Mammary epithelial cell (primary cell): ENCODE measurements at regions of chr17 and their contacts with region 1.

Region 1: DNA sequence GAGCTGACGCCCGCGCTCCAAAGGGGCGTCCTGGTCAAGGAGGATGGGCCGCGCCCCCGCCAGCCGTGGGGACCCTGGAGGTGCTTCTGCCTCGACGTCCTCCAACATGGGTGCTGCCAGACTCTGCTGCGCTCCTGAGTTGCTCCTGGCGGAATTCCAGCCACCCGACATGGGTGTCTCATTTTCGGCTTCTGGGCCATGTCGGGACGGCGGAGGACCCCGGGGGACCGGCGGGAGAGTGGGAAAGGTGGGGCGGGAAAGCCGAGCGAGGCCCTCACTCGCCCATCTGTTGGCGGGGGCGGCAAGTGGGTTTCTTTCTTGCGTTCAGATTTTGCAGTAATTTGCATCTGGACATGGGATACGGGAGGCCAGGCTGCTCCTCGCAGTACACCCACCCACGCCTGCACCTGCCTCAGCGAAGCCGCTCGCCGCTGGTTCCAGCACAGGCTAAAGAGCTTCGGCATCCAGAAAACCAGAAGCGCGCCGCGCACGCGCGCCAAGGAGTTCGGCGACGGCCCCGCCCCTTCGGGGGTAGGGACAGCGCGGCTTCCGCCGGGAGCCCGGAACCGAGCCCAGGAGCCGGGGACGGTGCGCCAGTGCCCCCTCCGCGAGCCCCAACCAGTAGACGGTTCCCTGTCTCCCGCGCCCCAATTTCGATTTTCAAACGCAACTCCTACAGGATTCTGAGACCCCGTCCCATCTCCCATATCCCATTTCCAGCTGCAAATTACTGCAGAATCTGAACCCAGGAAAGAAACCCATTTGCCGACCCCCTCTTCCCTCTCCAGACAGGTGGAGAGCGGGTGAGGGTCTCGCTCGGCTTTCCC is at the start of gene ARMC7:
- DNase-seq: peak; percentile 80
- H3K4me3 ChIP-seq: peak within 1 kb of the TSS; percentile 71 to 85 (median 79)
- H3K27ac ChIP-seq: peak within 1 kb of the TSS; percentile 16
- H3K4me1 ChIP-seq: peaks cover 15% of the 10 kb centered on the region
- H3K27me3 ChIP-seq: no peaks in the 10 kb centered on the region
- CTCF ChIP-seq: no peak
- total RNA-seq, gene ARMC7: 2.8 to 8.3 TPM

Region 2: DNA sequence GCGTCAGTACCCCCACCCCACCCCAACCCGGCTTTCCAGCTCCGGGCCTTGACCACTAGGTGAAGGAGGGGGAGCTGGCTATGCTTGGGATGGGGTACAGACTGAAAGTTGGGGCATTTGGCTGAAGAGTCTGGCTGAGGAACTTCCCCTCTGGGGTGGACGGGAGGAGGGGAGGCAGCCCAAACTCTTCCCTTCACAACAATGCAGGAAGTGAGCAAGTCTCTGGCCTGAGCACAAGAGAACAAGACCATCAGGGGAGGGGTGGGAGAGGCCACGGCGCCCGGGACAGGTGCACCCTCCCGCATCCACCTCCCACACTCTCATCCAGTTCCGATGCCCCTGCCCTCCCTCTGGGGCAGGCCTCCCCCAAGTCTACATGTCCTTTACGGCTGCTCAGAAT is 192.2 kb before region 1 on chr17:
- CTCF ChIA-PET with region 1: no interaction called
- dilution Hi-C with region 1: no loop called
- in situ Hi-C with region 1: no loop called
- intact Hi-C with region 1: no loop called
- DNase-seq: no peak
- H3K4me3 ChIP-seq: no peak overlapping the region
- H3K27ac ChIP-seq: no peak overlapping the region
- H3K4me1 ChIP-seq: peaks cover 15% of the 10 kb centered on the region
- H3K27me3 ChIP-seq: no peaks in the 10 kb centered on the region
- CTCF ChIP-seq: no peak

Region 3: DNA sequence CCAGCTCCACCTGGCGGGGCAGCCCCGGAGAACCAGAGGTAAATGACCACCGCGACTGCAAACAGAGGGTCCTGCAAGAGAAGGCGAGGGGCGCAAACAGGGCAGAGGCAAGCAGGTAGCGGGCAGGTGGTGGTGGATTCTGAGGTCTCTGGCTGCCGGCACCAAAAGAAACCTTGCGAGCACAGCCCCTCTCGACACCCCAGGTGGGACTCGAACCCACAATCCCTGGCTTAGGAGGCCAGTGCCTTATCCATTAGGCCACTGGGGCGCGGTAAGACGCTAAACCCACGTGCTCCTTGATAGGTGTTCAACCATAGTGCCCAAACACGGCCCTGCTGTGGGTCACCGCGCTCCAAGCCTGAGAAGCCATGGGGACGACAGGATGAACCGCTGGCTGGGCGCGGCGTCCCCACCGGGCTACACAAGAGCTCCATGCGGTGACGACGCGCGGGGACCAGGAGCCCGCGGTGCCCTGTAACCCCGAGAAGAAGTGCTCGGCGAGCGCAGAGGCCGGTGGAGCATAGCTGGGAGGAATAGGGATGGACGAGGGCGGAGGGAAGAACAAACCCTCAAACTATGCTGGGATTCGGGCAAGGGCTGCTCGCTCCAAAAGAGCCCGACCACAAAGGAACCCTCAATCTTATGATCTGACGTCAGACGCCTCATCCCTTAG is 75.2 kb before region 1 on chr17:
- CTCF ChIA-PET with region 1: no interaction called
- dilution Hi-C with region 1: no loop called
- in situ Hi-C with region 1: no loop called
- intact Hi-C with region 1: loop called (anchors 1 kb)
- DNase-seq: peak; percentile 91
- H3K4me3 ChIP-seq: peak overlapping the region; percentile 57 to 85 (median 65)
- H3K27ac ChIP-seq: peak overlapping the region; percentile 86
- H3K4me1 ChIP-seq: peaks cover 15% of the 10 kb centered on the region
- H3K27me3 ChIP-seq: no peaks in the 10 kb centered on the region
- CTCF ChIP-seq: peak in 1 of 2 donors; percentile 36

Region 4: GRCh38 chr17:75059369-75060345 is 50.0 kb before region 1 on chr17:
- CTCF ChIA-PET with region 1: interaction called, 7 read pairs
- dilution Hi-C with region 1: no loop called
- in situ Hi-C with region 1: loop called in 1 of 2 experiments (anchors 10 kb)
- intact Hi-C with region 1: no loop called
- DNase-seq: no peak
- H3K4me3 ChIP-seq: no peak overlapping the region
- H3K27ac ChIP-seq: no peak overlapping the region
- H3K4me1 ChIP-seq: no peaks in the 10 kb centered on the region
- H3K27me3 ChIP-seq: no peaks in the 10 kb centered on the region
- CTCF ChIP-seq: peak; percentile 13 to 31

Region 5: DNA sequence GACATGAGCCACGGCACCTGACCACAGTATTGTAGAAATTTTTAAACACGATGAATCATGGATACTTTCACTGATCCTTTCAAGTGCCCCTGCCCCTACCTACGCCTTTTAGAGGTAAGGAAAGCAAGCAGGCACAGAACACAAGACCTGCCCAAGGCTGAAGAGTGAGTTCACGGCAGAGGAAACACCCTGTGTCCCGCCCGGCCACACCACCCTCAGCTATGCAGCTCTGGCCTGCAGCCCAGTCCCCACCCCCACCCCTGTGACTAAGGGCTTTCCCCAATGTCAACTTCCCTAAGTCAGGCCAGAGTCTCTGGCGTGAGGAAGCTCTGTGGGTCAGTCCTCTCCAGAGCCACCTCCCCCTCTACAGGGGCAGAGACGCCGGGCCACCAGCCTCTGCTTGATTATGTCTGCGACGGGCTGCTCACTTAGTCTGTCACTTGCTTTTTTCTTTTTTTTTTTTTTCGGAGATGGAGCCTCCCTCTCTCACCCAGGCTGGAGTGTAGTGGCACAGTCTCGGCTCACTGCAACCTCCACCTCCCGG is 13.5 kb before region 1 on chr17:
- CTCF ChIA-PET with region 1: no interaction called
- dilution Hi-C with region 1: no loop called
- in situ Hi-C with region 1: no loop called
- intact Hi-C with region 1: loop called (anchors 1 kb)
- DNase-seq: peak; percentile 99
- H3K4me3 ChIP-seq: no peak overlapping the region
- H3K27ac ChIP-seq: peak overlapping the region; percentile 35
- H3K4me1 ChIP-seq: peaks cover 17% of the 10 kb centered on the region
- H3K27me3 ChIP-seq: no peaks in the 10 kb centered on the region
- CTCF ChIP-seq: no peak

Region 6: GRCh38 chr17:75154195-75155106 is 44.8 kb after region 1 on chr17 and contains the start of gene JPT1:
- CTCF ChIA-PET with region 1: interaction called, 7 read pairs
- dilution Hi-C with region 1: no loop called
- in situ Hi-C with region 1: no loop called
- intact Hi-C with region 1: loop called (anchors 1 kb)
- DNase-seq: peak; percentile 99
- H3K4me3 ChIP-seq: peak within 1 kb of the TSS; percentile 92 to 94 (median 93)
- H3K27ac ChIP-seq: peak within 1 kb of the TSS; percentile 61
- H3K4me1 ChIP-seq: peaks cover 29% of the 10 kb centered on the region
- H3K27me3 ChIP-seq: no peaks in the 10 kb centered on the region
- CTCF ChIP-seq: no peak
- total RNA-seq, gene JPT1: 107 to 223 TPM

Region 7: DNA sequence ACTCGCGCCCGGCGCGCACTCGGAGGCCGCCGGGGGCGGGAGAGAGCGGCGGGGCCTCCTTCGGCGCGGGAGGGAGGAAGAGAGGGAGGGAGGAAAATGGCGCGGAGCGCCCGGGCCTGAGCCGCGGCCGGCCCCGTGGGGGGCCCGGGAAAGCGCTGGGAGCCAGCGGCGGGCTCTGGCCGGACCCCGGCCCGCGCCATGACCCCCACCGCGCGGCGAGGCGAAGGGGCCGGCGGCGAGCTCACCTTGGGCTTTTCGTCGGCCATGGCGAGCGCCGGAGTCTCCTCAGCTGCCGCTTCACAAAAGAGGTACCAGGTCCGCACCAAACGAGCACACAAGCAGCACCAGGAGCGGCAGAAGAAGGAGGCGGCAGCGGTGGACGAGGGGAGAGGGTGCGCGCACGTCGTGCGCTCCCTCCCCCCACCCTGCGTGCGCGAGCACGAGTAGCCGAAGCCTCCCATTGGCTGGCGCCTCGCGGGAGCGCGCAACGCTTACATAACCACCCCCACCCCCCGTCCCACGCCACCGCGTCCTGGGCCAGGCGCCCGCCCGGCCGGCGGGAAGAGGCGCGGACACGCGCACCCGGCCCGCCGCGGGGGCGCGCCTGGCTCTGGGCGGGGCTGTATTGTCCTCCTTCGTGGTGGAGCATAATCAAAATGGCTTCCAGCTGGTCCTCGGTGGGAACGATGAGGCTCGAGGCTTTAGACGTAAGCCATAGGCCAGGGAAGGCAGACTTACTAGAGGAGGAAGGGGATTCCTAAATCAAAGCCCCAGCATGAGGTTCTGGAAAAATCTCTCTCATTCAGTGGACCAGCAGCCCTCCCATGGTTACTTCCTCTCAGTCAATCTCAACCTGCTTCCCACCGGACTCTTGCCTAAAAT is 73.2 kb after region 1 on chr17 and contains the start of gene SUMO2:
- CTCF ChIA-PET with region 1: interaction called, 5 read pairs
- dilution Hi-C with region 1: loop called (anchors 5 kb)
- in situ Hi-C with region 1: loop called (anchors 10 kb)
- intact Hi-C with region 1: no loop called
- DNase-seq: peak; percentile 92
- H3K4me3 ChIP-seq: peak within 1 kb of the TSS; percentile 59 to 97 (median 76)
- H3K27ac ChIP-seq: peak within 1 kb of the TSS; percentile 83
- H3K4me1 ChIP-seq: peaks cover 10% of the 10 kb centered on the region
- H3K27me3 ChIP-seq: no peaks in the 10 kb centered on the region
- CTCF ChIP-seq: peak in 1 of 2 donors; percentile 45
- total RNA-seq, gene SUMO2: 49.7 to 279 TPM

Region 8: GRCh38 chr17:75412455-75413317 is 303.1 kb after region 1 on chr17:
- CTCF ChIA-PET with region 1: no interaction called
- dilution Hi-C with region 1: no loop called
- in situ Hi-C with region 1: no loop called
- intact Hi-C with region 1: loop called (anchors 10 kb)
- DNase-seq: peak; percentile 62
- H3K4me3 ChIP-seq: no peak overlapping the region
- H3K27ac ChIP-seq: no peak overlapping the region
- H3K4me1 ChIP-seq: peaks cover 3% of the 10 kb centered on the region
- H3K27me3 ChIP-seq: no peaks in the 10 kb centered on the region
- CTCF ChIP-seq: peak; percentile 69 to 75